ENCODE measurements at regions of chr3 and their contacts with region 1.

Region 1: DNA sequence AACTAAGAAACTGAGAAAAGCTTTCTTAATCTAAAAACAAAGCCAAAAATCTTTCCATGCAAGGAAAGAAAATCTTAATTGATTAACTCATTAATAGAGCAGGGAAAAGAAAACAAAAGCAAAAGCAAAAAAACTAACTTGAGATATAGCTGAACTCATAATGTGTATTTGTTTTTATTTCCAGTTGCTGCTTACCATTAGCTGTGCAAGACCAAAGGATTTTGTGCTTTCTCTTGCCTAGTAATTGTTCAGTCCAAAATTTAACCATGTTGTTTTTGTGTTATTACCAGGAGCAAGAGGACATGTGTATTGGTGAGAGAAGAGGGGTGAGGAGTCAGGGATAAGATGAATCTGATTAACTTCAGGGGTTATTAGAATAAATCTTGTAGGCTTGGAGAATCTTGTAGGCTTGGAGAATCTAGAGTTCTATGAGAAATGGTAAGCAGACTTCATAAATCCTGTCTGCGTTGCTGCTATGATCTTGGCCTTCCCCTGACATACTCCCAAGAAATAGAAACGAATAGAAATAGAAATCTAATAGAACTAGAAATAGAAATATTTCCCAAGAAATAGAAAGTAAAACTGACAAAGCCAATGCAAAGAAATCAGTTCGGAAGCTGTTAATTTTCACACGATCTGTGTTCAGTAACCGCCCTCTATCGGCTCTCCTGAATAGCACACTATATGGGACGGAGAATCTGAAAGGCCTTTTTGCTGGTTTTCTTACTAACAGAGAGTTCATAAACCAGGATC is 72.6 kb upstream of the TNFSF10 start:
- DNase-seq: peak in 1 of 2 donors; percentile 54
- ATAC-seq: peak in 7 of 8 donors; percentile 66 to 78 (median 74)
- H3K4me3 ChIP-seq: peak overlapping the region in 8 of 10 donors; percentile 3 to 43 (median 37)
- H3K27ac ChIP-seq: peak overlapping the region; percentile 70 to 95 (median 84)
- H3K4me1 ChIP-seq: peaks cover 3 to 56% (median 21%) of the 10 kb centered on the region in 9 donors
- H3K27me3 ChIP-seq: no peaks in the 10 kb centered on the region
- CTCF ChIP-seq: peak; percentile 60 to 88 (median 80)

Region 2: DNA sequence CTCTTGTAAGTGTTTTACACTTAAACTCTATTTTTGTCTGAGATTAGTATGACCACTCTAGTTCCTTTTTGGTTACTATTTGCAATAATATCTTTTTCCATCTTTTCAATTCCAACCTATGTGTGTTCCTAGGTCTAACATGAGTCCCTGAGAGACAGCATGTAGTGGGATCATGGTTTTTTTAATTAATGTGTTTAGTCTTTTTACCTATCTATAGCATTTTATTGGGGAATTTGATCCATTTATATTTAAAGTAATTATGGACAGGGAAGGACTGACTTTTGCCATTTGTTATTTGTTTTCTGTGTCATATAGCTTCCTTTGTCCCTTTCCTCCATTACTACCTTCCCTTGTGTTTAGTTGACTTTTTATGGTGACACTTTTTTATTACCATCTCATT is 94.3 kb before region 1 on chr3:
- intact Hi-C with region 1: loop called in 1 of 10 experiments (anchors 5 kb)
- DNase-seq: no peak
- ATAC-seq: no peak
- H3K4me3 ChIP-seq: no peak overlapping the region
- H3K27ac ChIP-seq: no peak overlapping the region
- H3K4me1 ChIP-seq: no peaks in the 10 kb centered on the region
- H3K27me3 ChIP-seq: no peaks in the 10 kb centered on the region
- CTCF ChIP-seq: no peak

Region 3: GRCh38 chr3:172511783-172512762 is 83.7 kb before region 1 on chr3:
- intact Hi-C with region 1: loop called in 1 of 10 experiments (anchors 2 kb)
- DNase-seq: peak; percentile 56 to 62
- ATAC-seq: peak in 7 of 8 donors; percentile 52 to 72 (median 62)
- H3K4me3 ChIP-seq: peak overlapping the region in 1 of 10 donors; percentile 6
- H3K27ac ChIP-seq: peak overlapping the region in 8 of 10 donors; percentile 39 to 90 (median 68)
- H3K4me1 ChIP-seq: peaks cover 8 to 70% (median 40%) of the 10 kb centered on the region in 9 donors
- H3K27me3 ChIP-seq: no peaks in the 10 kb centered on the region
- CTCF ChIP-seq: no peak

Region 4: GRCh38 chr3:172546628-172547214 is 49.1 kb before region 1 on chr3:
- intact Hi-C with region 1: loop called in 2 of 10 experiments (anchors 10 kb)
- DNase-seq: no peak
- ATAC-seq: peak in 4 of 8 donors; percentile 28 to 63 (median 45)
- H3K4me3 ChIP-seq: no peak overlapping the region
- H3K27ac ChIP-seq: peak overlapping the region in 6 of 10 donors; percentile 24 to 75 (median 60)
- H3K4me1 ChIP-seq: peaks cover 0 to 41% (median 24%) of the 10 kb centered on the region in 9 donors
- H3K27me3 ChIP-seq: no peaks in the 10 kb centered on the region
- CTCF ChIP-seq: peak in 2 of 9 donors; percentile 8 to 43

Region 5: DNA sequence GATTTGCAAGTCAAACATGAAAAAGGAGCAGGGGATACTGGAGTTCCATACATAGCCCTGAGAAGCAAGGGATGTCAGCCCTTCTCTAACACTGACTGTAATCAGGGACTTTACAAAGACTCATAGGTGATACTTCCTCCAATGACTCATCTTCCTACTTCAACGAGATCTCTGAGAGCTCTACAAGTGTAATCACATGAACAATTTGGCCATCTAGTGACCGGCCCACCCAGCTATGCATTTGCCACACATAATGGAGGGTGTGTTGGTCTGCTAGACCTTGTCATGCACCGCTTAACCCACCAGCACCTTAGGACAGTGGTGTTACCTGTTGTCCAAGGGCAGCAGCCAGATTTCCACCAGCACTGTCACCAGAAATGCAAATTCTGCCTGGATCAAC is 39.8 kb after region 1 on chr3:
- intact Hi-C with region 1: no loop called
- DNase-seq: no peak
- ATAC-seq: peak in 4 of 8 donors; percentile 40 to 75 (median 50)
- H3K4me3 ChIP-seq: no peak overlapping the region
- H3K27ac ChIP-seq: peak overlapping the region in 3 of 10 donors; percentile 10 to 38 (median 33)
- H3K4me1 ChIP-seq: peaks cover 0 to 30% (median 10%) of the 10 kb centered on the region in 9 donors
- H3K27me3 ChIP-seq: no peaks in the 10 kb centered on the region
- CTCF ChIP-seq: no peak

Region 6: DNA sequence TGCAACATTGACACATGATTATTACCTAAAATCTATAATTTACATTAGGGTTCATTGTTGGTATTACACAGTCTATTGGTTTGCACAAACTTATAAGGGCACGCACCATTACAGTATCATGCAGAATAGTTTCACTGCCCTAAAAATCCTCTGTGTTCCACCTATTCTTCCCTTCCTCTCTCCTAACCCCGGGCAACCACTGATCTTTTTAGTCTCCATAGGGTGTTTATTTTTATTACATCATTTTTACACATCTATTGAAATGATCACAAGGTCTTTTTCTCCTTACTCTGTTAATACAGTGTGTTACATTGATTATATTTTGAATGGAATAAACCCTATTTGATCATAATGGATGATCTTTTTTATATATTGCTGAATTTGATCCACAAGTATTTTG is 139.2 kb after region 1 on chr3:
- intact Hi-C with region 1: no loop called
- DNase-seq: no peak
- ATAC-seq: no peak
- H3K4me3 ChIP-seq: no peak overlapping the region
- H3K27ac ChIP-seq: no peak overlapping the region
- H3K4me1 ChIP-seq: no peaks in the 10 kb centered on the region
- H3K27me3 ChIP-seq: no peaks in the 10 kb centered on the region
- CTCF ChIP-seq: no peak

Region 7: GRCh38 chr3:172746476-172746875 is 150.7 kb after region 1 on chr3:
- intact Hi-C with region 1: no loop called
- DNase-seq: no peak
- ATAC-seq: no peak
- H3K4me3 ChIP-seq: no peak overlapping the region
- H3K27ac ChIP-seq: no peak overlapping the region
- H3K4me1 ChIP-seq: peaks cover 0 to 20% (median 15%) of the 10 kb centered on the region in 9 donors
- H3K27me3 ChIP-seq: no peaks in the 10 kb centered on the region
- CTCF ChIP-seq: no peak

Measured in heart right ventricle (tissue), 16 donors.